ENCODE measurements at regions of chr20 and their contacts with region 1.

Region 1: GRCh38 chr20:330233-331149 is 5.1 kb downstream of the SOX12 start:
- DNase-seq: peak; percentile 34 to 74 (median 61)
- ATAC-seq: peak; percentile 65
- H3K4me3 ChIP-seq: no peak overlapping the region
- H3K4me3 Mint-ChIP-seq: no peak overlapping the region
- H3K27ac ChIP-seq: no peak overlapping the region
- H3K27ac Mint-ChIP-seq: peak overlapping the region in 7 of 9 donors; percentile 28 to 85 (median 68)
- H3K4me1 ChIP-seq: peaks cover 4% of the 10 kb centered on the region in 2 donors
- H3K4me1 Mint-ChIP-seq: peaks cover 12 to 30% (median 21%) of the 10 kb centered on the region in 7 donors
- H3K27me3 ChIP-seq: no peaks in the 10 kb centered on the region
- H3K27me3 Mint-ChIP-seq: peaks cover 0 to 3% (median 0%) of the 10 kb centered on the region in 5 donors

Region 2: DNA sequence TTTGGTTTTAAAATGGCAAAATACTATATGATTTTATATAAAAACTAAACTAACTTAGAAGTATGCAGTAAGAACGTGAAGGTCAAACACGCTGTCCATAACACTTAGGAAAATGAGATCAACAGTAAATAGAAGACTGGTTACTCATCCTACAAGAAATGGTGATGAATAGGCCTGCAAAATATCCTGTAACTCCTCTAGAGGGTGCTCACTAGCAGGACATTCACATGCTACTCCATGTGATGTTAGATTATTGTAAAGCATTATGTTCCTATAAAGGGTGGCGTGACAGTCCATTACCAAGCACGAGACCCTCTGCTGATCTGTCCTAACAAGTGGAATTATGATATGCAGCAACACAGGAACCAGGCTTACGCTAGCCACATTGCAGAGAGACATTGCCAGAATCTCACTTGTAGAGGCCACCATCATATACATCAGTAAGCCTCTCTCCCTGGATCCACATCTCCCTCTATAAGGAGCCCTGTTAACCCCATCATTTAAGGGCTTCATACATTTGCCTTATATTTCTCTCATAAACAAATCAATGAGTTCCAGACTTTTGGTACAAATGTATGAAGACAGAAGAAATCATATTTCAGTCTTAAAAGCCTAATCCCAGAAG is 121.4 kb before region 1 on chr20:
- CTCF ChIA-PET with region 1: interaction called, 11 read pairs
- POLR2A ChIA-PET with region 1: no interaction called
- intact Hi-C with region 1: loop called (anchors 1 kb)
- DNase-seq: peak in 7 of 9 donors; percentile 40 to 67 (median 55)
- ATAC-seq: peak; percentile 86
- H3K4me3 ChIP-seq: no peak overlapping the region
- H3K4me3 Mint-ChIP-seq: no peak overlapping the region
- H3K27ac ChIP-seq: no peak overlapping the region
- H3K27ac Mint-ChIP-seq: no peak overlapping the region
- H3K4me1 ChIP-seq: no peaks in the 10 kb centered on the region
- H3K4me1 Mint-ChIP-seq: no peaks in the 10 kb centered on the region
- H3K27me3 ChIP-seq: no peaks in the 10 kb centered on the region
- H3K27me3 Mint-ChIP-seq: peaks cover 0 to 28% (median 0%) of the 10 kb centered on the region in 5 donors

Region 3: GRCh38 chr20:258963-259362 is 71.5 kb before region 1 on chr20:
- CTCF ChIA-PET with region 1: interaction called, 17 read pairs
- POLR2A ChIA-PET with region 1: no interaction called
- intact Hi-C with region 1: no loop called
- DNase-seq: no peak
- ATAC-seq: no peak
- H3K4me3 ChIP-seq: no peak overlapping the region
- H3K4me3 Mint-ChIP-seq: no peak overlapping the region
- H3K27ac ChIP-seq: no peak overlapping the region
- H3K27ac Mint-ChIP-seq: peak overlapping the region in 1 of 9 donors; percentile 31
- H3K4me1 ChIP-seq: no peaks in the 10 kb centered on the region
- H3K4me1 Mint-ChIP-seq: peaks cover 7 to 16% (median 12%) of the 10 kb centered on the region in 7 donors
- H3K27me3 ChIP-seq: no peaks in the 10 kb centered on the region
- H3K27me3 Mint-ChIP-seq: peaks cover 0 to 9% (median 0%) of the 10 kb centered on the region in 5 donors

Region 4: GRCh38 chr20:297098-297924 is 33.2 kb before region 1 on chr20 and contains the start of gene ZCCHC3:
- CTCF ChIA-PET with region 1: interaction called, 6 read pairs
- POLR2A ChIA-PET with region 1: interaction called, 74 read pairs
- intact Hi-C with region 1: loop called in 1 of 2 experiments (anchors 1 kb)
- DNase-seq: peak; percentile 72 to 89 (median 84)
- ATAC-seq: peak; percentile 94
- H3K4me3 ChIP-seq: peak within 1 kb of the TSS; percentile 96
- H3K4me3 Mint-ChIP-seq: peak within 1 kb of the TSS; percentile 92 to 100 (median 98)
- H3K27ac ChIP-seq: peak within 1 kb of the TSS; percentile 91
- H3K27ac Mint-ChIP-seq: peak within 1 kb of the TSS; percentile 94 to 100 (median 97)
- H3K4me1 ChIP-seq: peaks cover 14 to 21% of the 10 kb centered on the region in 2 donors
- H3K4me1 Mint-ChIP-seq: peaks cover 33 to 51% (median 40%) of the 10 kb centered on the region in 7 donors
- H3K27me3 ChIP-seq: no peaks in the 10 kb centered on the region
- H3K27me3 Mint-ChIP-seq: peaks cover 0 to 2% (median 0%) of the 10 kb centered on the region in 5 donors
- total RNA-seq, gene ZCCHC3: 14.6 to 31.9 (median 27.1) TPM

Region 5: DNA sequence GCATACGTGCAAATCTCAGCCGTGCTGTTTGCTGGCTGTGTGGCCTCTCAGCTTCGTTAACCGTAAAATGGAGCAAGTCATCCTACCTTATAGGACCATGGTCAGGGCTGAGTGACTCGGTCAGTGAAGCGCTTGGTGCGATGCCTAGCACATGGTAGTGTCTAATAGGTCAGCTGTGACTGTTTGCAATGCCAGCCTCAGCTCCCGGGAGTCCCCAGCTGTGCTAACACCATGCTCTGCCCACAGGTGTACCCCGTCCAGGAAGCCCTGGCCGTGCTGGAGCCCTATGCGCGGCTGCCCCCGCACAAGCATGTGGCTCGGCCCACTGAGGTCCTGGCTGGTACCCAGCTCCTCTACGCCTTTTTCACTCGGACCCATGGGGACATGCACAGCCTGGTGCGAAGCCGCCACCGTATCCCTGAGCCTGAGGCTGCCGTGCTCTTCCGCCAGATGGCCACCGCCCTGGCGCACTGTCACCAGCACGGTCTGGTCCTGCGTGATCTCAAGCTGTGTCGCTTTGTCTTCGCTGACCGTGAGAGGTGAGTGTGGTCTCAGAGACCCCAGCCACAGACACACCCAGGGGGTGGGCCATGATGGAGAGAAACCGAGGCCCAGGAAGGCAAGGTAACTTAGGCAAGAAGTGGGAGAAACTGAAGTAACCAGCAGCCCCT is 60.7 kb after region 1 on chr20:
- CTCF ChIA-PET with region 1: no interaction called
- POLR2A ChIA-PET with region 1: no interaction called
- intact Hi-C with region 1: no loop called
- DNase-seq: no peak
- ATAC-seq: no peak
- H3K4me3 ChIP-seq: no peak overlapping the region
- H3K4me3 Mint-ChIP-seq: no peak overlapping the region
- H3K27ac ChIP-seq: no peak overlapping the region
- H3K27ac Mint-ChIP-seq: no peak overlapping the region
- H3K4me1 ChIP-seq: no peaks in the 10 kb centered on the region
- H3K4me1 Mint-ChIP-seq: peaks cover 0 to 5% (median 0%) of the 10 kb centered on the region in 7 donors
- H3K27me3 ChIP-seq: no peaks in the 10 kb centered on the region
- H3K27me3 Mint-ChIP-seq: no peaks in the 10 kb centered on the region

Region 6: GRCh38 chr20:496126-496696 is 165.7 kb after region 1 on chr20:
- CTCF ChIA-PET with region 1: no interaction called
- POLR2A ChIA-PET with region 1: no interaction called
- intact Hi-C with region 1: no loop called
- DNase-seq: no peak
- ATAC-seq: no peak
- H3K4me3 ChIP-seq: no peak overlapping the region
- H3K4me3 Mint-ChIP-seq: no peak overlapping the region
- H3K27ac ChIP-seq: no peak overlapping the region
- H3K27ac Mint-ChIP-seq: peak overlapping the region in 2 of 9 donors; percentile 20 to 40
- H3K4me1 ChIP-seq: no peaks in the 10 kb centered on the region
- H3K4me1 Mint-ChIP-seq: no peaks in the 10 kb centered on the region
- H3K27me3 ChIP-seq: no peaks in the 10 kb centered on the region
- H3K27me3 Mint-ChIP-seq: no peaks in the 10 kb centered on the region

Measured in naive thymus-derived CD4-positive, alpha-beta T cell (primary cell).